Naive thymus-derived CD4-positive, alpha-beta T cell (primary cell): ENCODE measurements at regions of chr4 and their contacts with region 1.

Region 1: DNA sequence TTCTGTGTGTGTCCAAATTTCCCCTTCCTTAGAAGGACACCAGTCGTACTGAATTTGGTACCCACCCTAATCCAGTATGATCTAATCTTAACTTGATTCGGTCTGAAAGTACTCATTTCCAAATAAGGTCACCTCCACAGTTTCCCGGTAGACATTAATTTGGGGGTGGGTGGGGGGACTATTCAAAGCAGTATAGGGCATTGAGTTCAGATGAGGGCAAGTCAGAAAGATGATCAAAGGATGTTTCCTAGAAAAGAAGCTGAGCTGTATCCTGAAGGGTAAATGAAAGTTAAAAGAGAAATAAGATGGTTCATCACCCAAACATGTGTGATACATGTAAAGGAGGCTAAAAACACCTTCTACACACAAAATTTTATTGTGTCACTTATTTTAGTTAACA is 42.0 kb upstream of the SCRG1 start:
- DNase-seq: no peak
- ATAC-seq: peak; percentile 50
- H3K4me3 ChIP-seq: no peak overlapping the region
- H3K4me3 Mint-ChIP-seq: peak overlapping the region in 2 of 10 donors; percentile 5 to 77
- H3K27ac ChIP-seq: no peak overlapping the region
- H3K27ac Mint-ChIP-seq: peak overlapping the region in 2 of 9 donors; percentile 20 to 62
- H3K4me1 ChIP-seq: peaks cover 0 to 6% of the 10 kb centered on the region in 2 donors
- H3K4me1 Mint-ChIP-seq: peaks cover 0 to 40% (median 11%) of the 10 kb centered on the region in 7 donors
- H3K27me3 ChIP-seq: no peaks in the 10 kb centered on the region
- H3K27me3 Mint-ChIP-seq: no peaks in the 10 kb centered on the region

Region 2: GRCh38 chr4:172709376-172709775 is 731.5 kb before region 1 on chr4:
- CTCF ChIA-PET with region 1: no interaction called
- POLR2A ChIA-PET with region 1: no interaction called
- intact Hi-C with region 1: no loop called
- DNase-seq: no peak
- ATAC-seq: no peak
- H3K4me3 ChIP-seq: no peak overlapping the region
- H3K4me3 Mint-ChIP-seq: no peak overlapping the region
- H3K27ac ChIP-seq: no peak overlapping the region
- H3K27ac Mint-ChIP-seq: no peak overlapping the region
- H3K4me1 ChIP-seq: no peaks in the 10 kb centered on the region
- H3K4me1 Mint-ChIP-seq: no peaks in the 10 kb centered on the region
- H3K27me3 ChIP-seq: no peaks in the 10 kb centered on the region
- H3K27me3 Mint-ChIP-seq: no peaks in the 10 kb centered on the region

Region 3: GRCh38 chr4:173426064-173426463 is 14.8 kb before region 1 on chr4:
- CTCF ChIA-PET with region 1: no interaction called
- POLR2A ChIA-PET with region 1: no interaction called
- intact Hi-C with region 1: loop called in 1 of 2 experiments (anchors 2 kb)
- DNase-seq: peak in 3 of 9 donors; percentile 22 to 39 (median 25)
- ATAC-seq: peak; percentile 32
- H3K4me3 ChIP-seq: no peak overlapping the region
- H3K4me3 Mint-ChIP-seq: peak overlapping the region; percentile 7 to 77 (median 52)
- H3K27ac ChIP-seq: no peak overlapping the region
- H3K27ac Mint-ChIP-seq: peak overlapping the region in 8 of 9 donors; percentile 9 to 84 (median 68)
- H3K4me1 ChIP-seq: peaks cover 9 to 22% of the 10 kb centered on the region in 2 donors
- H3K4me1 Mint-ChIP-seq: peaks cover 19 to 43% (median 32%) of the 10 kb centered on the region in 7 donors
- H3K27me3 ChIP-seq: no peaks in the 10 kb centered on the region
- H3K27me3 Mint-ChIP-seq: peaks cover 0 to under 1% (median 0%) of the 10 kb centered on the region in 5 donors

Region 4: DNA sequence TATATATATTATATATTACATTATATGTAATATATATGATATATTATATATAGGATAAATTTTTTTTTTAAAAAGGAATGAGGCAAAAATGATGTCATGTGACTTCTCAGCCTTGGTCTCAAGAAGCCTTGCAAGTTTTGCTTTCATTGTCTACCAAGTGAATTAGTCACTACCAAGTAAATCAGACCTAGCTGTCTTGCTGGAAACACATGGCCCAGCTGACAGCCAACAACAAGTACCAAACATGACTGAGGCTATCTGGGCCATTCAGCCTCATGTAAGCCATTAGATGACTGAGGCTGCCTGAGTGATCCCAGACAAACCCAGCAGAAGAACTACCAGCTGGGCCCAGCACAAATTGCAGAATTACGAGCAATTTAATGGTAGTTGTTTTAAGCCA is 44.3 kb after region 1 on chr4:
- CTCF ChIA-PET with region 1: no interaction called
- POLR2A ChIA-PET with region 1: no interaction called
- intact Hi-C with region 1: loop called in 1 of 2 experiments (anchors 2 kb)
- DNase-seq: no peak
- ATAC-seq: no peak
- H3K4me3 ChIP-seq: no peak overlapping the region
- H3K4me3 Mint-ChIP-seq: no peak overlapping the region
- H3K27ac ChIP-seq: no peak overlapping the region
- H3K27ac Mint-ChIP-seq: no peak overlapping the region
- H3K4me1 ChIP-seq: no peaks in the 10 kb centered on the region
- H3K4me1 Mint-ChIP-seq: peaks cover 0 to under 1% (median 0%) of the 10 kb centered on the region in 7 donors
- H3K27me3 ChIP-seq: no peaks in the 10 kb centered on the region
- H3K27me3 Mint-ChIP-seq: peaks cover 0 to 7% (median 0%) of the 10 kb centered on the region in 5 donors